Ascending aorta (tissue), 2 donors: ENCODE measurements at regions of chr12 and their contacts with region 1.

Region 1: GRCh38 chr12:15590180-15590826 is 198.9 kb downstream of the EPS8 start:
- DNase-seq: peak in 1 of 2 donors; percentile 77
- H3K4me3 ChIP-seq: peak overlapping the region in 1 of 2 donors; percentile 56
- H3K27ac ChIP-seq: peak overlapping the region in 1 of 2 donors; percentile 37
- H3K4me1 ChIP-seq: peaks cover 3% of the 10 kb centered on the region in 2 donors
- H3K27me3 ChIP-seq: no peaks in the 10 kb centered on the region
- CTCF ChIP-seq: peak; percentile 85 to 93 (median 88)

Region 2: DNA sequence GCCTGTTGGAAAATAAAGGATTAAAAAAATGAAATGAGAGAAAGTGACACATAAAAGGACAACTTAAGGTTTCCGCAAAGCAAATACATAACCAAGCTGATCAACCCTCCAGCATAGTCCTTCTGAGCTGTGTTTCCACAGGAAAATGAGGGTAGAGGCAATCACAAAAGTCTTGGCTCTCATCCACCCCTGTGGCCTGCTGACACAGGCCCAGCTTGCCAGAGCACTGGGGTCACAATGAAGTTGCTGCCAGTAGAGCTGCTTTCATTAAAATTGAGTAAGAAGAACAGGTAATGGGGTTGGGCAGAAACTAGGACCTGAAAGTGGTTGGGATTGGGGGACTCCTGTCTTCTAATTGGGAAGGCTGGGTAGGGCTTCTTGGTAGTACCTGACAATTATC is 435.0 kb before region 1 on chr12:
- intact Hi-C with region 1: no loop called
- DNase-seq: no peak
- H3K4me3 ChIP-seq: no peak overlapping the region
- H3K27ac ChIP-seq: peak overlapping the region; percentile 37 to 81
- H3K4me1 ChIP-seq: peaks cover 22 to 53% of the 10 kb centered on the region in 2 donors
- H3K27me3 ChIP-seq: no peaks in the 10 kb centered on the region
- CTCF ChIP-seq: no peak

Region 3: GRCh38 chr12:15546102-15546701 is 44.1 kb before region 1 on chr12:
- intact Hi-C with region 1: no loop called
- DNase-seq: no peak
- H3K4me3 ChIP-seq: peak overlapping the region; percentile 9 to 51
- H3K27ac ChIP-seq: peak overlapping the region; percentile 82 to 87
- H3K4me1 ChIP-seq: peaks cover 11 to 41% of the 10 kb centered on the region in 2 donors
- H3K27me3 ChIP-seq: no peaks in the 10 kb centered on the region
- CTCF ChIP-seq: no peak

Region 4: DNA sequence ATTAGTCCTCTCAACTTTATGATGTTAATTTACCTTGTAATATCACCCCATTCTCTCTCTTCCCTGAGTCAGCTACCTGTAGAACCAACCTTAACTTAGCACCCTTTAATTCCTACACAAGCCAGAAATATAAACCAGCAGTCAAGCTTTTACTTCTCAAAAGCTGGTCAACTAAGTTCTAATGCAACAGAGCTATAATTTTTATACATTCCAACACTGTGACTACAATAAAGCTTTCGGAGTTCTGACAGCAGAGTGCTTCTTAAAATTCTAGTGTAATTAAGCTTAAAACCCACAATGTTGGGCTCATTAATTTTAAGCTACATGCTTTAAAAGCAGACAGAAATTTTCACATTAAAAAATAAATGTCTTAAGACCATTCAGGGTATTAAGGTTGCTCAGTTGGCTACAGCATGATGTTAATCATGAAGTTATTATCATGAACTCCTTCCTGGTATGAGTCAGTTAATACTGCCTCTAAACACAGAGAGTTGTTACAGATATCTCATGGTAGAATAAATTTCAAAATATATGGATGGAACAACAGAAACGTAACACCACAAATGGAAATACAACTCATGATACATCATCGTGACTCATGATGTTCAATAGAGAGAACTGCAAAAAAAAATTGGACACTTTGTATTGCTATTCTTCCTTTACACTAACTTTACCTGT is 72.1 kb after region 1 on chr12:
- intact Hi-C with region 1: loop called (anchors 10 kb)
- DNase-seq: no peak
- H3K4me3 ChIP-seq: no peak overlapping the region
- H3K27ac ChIP-seq: no peak overlapping the region
- H3K4me1 ChIP-seq: no peaks in the 10 kb centered on the region
- H3K27me3 ChIP-seq: no peaks in the 10 kb centered on the region
- CTCF ChIP-seq: no peak

Region 5: DNA sequence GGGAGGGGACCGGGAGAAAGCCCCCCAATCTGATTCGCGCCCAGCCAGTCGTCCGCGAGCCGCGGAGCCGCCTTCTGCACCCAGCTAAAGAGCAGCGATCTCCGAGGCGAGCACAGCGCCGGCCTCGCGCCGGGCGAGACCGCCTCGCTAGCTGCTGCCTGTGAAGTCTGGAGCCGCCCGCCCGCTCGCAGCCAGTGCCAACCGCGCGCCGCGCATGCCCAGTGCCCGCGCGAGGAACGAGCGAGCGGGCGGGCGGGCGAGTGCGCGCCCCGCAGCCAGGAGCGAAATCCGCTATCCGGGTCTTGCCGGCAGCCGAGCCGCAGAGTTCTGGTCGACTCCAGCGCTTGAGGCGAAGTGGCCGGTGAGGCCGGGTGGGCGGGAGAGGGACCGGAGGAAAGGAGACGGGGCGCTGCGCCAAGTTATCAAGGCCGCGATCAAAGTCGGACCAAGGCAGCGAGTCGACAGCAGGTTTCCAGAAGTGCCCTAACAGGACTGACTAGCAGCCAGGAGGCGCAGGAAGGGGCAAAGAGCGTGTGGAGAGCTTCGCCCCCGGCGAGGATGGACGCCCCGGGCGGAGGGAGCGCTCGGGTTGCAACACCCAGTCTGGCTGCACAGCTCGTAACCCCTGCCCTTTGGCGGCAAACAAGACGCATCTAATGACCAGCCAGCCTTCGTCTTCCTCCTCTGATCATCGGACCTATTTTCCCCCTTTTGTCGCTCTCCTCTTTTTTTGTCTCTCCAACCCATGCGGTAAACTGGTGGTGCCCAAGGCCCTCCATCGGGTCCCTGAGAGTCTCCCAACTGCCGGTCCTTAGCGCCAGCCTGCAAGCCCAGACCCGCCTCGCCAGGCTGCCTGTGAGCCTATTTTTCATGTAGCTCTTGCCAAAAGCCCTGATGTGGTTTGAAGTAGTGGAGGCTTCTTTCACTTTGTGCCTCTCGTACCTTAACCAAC is 199.2 kb after region 1 on chr12 and contains the start of gene EPS8:
- intact Hi-C with region 1: loop called (anchors 2 kb)
- DNase-seq: peak; percentile 54 to 96
- H3K4me3 ChIP-seq: peak within 1 kb of the TSS; percentile 74 to 90
- H3K27ac ChIP-seq: peak within 1 kb of the TSS; percentile 88 to 92
- H3K4me1 ChIP-seq: no peaks in the 10 kb centered on the region
- H3K27me3 ChIP-seq: no peaks in the 10 kb centered on the region
- CTCF ChIP-seq: no peak
- total RNA-seq, gene EPS8: 94.6 TPM

Region 6: DNA sequence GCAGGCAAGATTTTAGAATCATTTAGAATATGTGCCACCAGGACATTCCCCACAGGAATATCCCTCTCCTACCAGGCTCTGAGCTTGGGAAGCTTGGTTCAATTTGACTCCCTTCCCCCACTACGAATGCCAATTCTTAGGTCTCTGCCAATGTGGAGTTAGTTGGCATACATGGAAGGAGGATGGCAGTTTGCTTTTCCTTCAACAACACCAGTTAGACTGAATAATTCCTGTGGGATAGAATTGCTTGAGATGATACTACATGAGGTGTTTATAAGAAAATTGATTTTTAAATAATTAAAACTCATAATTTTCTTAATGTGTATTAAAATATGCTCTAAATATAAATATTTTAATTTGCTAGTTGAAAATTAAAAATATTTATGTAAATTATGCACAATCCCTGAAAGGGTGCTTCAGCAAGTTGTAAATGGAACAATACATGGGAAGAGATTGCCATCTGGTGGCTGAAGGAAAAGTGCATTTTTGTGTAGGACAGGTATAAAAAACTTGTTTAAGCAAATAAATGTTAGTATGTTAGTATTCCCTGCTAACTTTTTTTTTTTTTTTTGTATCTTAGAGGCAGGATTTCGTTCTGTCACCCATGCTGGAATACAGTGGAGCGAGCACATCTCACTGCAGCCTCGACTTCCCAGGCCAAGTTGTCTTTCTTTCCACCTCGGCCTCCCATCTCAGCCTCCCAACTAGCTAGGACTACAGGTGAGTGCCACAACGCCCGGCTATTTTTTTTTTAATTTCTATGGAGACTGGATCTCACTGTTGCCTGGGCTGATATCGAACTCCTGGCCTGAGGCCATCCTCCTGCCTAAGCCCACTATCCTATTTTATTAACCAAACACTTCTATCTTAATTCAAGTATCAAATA is 266.0 kb after region 1 on chr12:
- intact Hi-C with region 1: loop called (anchors 1 kb)
- DNase-seq: peak in 1 of 2 donors; percentile 77
- H3K4me3 ChIP-seq: no peak overlapping the region
- H3K27ac ChIP-seq: no peak overlapping the region
- H3K4me1 ChIP-seq: peaks cover 0 to 3% of the 10 kb centered on the region in 2 donors
- H3K27me3 ChIP-seq: no peaks in the 10 kb centered on the region
- CTCF ChIP-seq: peak; percentile 71 to 84 (median 80)